Activated CD4-positive, alpha-beta memory T cell treated with anti-CD3 and anti-CD28 coated beads for 36 hours (primary cell): ENCODE measurements at regions of chr1 and their contacts with region 1.

Region 1: GRCh38 chr1:236281654-236282424 is at the start of gene ERO1B:
- DNase-seq: peak; percentile 96
- H3K4me3 Mint-ChIP-seq: peak within 1 kb of the TSS; percentile 90
- H3K27ac Mint-ChIP-seq: peak within 1 kb of the TSS; percentile 69
- H3K4me1 Mint-ChIP-seq: peaks cover 42% of the 10 kb centered on the region
- H3K27me3 Mint-ChIP-seq: peaks cover 1% of the 10 kb centered on the region
- total RNA-seq, gene ERO1B: 2.7 to 2.9 TPM

Region 2: GRCh38 chr1:235504496-235505222 is 777.2 kb before region 1 on chr1:
- CTCF ChIA-PET with region 1: no interaction called
- POLR2A ChIA-PET with region 1: no interaction called
- intact Hi-C with region 1: loop called (anchors 2 kb)
- DNase-seq: peak; percentile 99
- H3K4me3 Mint-ChIP-seq: peak overlapping the region; percentile 86
- H3K27ac Mint-ChIP-seq: peak overlapping the region; percentile 95
- H3K4me1 Mint-ChIP-seq: peaks cover 32% of the 10 kb centered on the region
- H3K27me3 Mint-ChIP-seq: no peaks in the 10 kb centered on the region

Region 3: DNA sequence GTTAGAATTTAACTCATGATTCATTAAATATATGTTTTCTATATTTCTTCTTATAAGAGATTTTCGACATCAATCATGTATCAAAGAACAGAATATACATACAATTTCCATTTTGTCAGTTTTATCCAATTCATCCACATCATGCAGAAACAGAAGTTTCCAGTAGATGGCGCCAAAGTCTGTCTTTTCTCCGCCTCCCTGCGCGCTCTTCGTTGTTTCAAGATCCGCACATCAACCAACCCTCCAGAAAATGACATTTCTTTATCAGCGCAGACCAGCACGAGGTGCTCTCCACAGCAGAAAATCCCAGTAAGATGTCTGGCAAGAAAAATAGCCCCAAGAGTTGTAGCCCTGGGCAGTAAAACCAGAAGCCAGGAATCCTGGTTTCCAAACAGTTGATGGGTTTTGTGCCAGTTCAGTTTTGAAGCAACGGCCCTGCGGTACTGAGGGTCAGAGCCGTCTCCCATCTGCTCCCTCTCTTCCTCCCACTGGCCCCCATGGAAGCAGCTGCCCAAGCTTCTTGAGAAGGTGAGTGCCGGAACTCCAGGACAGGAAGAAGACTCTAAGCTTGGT is 178.1 kb before region 1 on chr1:
- CTCF ChIA-PET with region 1: interaction called, 3 read pairs
- POLR2A ChIA-PET with region 1: no interaction called
- intact Hi-C with region 1: loop called (anchors 5 kb)
- DNase-seq: peak; percentile 69
- H3K4me3 Mint-ChIP-seq: no peak overlapping the region
- H3K27ac Mint-ChIP-seq: no peak overlapping the region
- H3K4me1 Mint-ChIP-seq: peaks cover 5% of the 10 kb centered on the region
- H3K27me3 Mint-ChIP-seq: no peaks in the 10 kb centered on the region

Region 4: DNA sequence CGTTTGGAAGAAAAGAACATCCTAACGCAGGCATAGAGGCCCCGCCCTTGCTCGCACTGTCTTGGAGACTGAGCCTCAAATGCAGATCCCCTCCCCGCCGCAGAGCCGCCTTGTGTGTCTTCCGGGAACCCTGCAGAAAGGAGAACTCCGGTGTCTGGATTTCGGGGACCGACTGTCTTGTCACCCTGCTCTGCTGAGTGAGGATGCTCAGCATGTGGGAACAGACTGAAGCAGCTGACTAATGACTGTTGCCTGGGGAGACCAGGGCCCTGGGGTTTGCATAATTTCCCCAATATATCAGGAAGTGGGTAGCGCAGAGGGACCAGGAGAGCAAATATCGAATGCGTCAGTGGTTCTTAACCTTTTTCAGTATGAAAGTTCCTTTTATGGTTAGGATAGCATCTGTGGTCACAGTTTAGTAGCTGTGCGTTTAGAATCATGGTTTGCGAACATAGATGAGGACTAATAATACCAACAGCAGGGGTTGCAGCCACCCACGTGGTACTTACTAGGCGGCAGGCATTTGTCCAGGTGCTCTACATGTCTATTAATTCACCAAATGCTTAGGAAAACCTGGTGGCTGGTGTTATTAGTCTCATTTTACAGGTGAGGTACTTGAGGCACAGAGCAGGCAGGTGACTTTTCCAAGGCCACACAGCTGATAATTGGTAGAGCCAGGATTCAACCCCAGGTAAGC is 125.2 kb before region 1 on chr1:
- CTCF ChIA-PET with region 1: no interaction called
- POLR2A ChIA-PET with region 1: no interaction called
- intact Hi-C with region 1: loop called (anchors 5 kb)
- DNase-seq: peak; percentile 72
- H3K4me3 Mint-ChIP-seq: no peak overlapping the region
- H3K27ac Mint-ChIP-seq: no peak overlapping the region
- H3K4me1 Mint-ChIP-seq: peaks cover 36% of the 10 kb centered on the region
- H3K27me3 Mint-ChIP-seq: no peaks in the 10 kb centered on the region

Region 5: GRCh38 chr1:236394905-236395780 is 113.3 kb after region 1 on chr1:
- CTCF ChIA-PET with region 1: interaction called, 3 read pairs
- POLR2A ChIA-PET with region 1: interaction called, 6 read pairs
- intact Hi-C with region 1: loop called (anchors 1 kb)
- DNase-seq: peak; percentile 66
- H3K4me3 Mint-ChIP-seq: peak overlapping the region; percentile 82
- H3K27ac Mint-ChIP-seq: peak overlapping the region; percentile 86
- H3K4me1 Mint-ChIP-seq: peaks cover 31% of the 10 kb centered on the region
- H3K27me3 Mint-ChIP-seq: peaks cover 19% of the 10 kb centered on the region

Region 6: GRCh38 chr1:236523701-236524141 is 241.9 kb after region 1 on chr1 and contains the start of gene LGALS8:
- CTCF ChIA-PET with region 1: no interaction called
- POLR2A ChIA-PET with region 1: no interaction called
- intact Hi-C with region 1: loop called (anchors 5 kb)
- DNase-seq: peak; percentile 94
- H3K4me3 Mint-ChIP-seq: peak within 1 kb of the TSS; percentile 97
- H3K27ac Mint-ChIP-seq: peak within 1 kb of the TSS; percentile 98
- H3K4me1 Mint-ChIP-seq: peaks cover 23% of the 10 kb centered on the region
- H3K27me3 Mint-ChIP-seq: no peaks in the 10 kb centered on the region
- total RNA-seq, gene LGALS8: 83.7 to 88.3 TPM